Activated naive CD4-positive, alpha-beta T cell treated with anti-CD3 and anti-CD28 coated beads for 36 hours (primary cell): ENCODE measurements at regions of chr19 and their contacts with region 1.

Region 1: GRCh38 chr19:1884719-1885334 is 469 bp downstream of the ABHD17A start:
- DNase-seq: no peak
- H3K4me3 Mint-ChIP-seq: peak overlapping the region; percentile 96
- H3K27ac Mint-ChIP-seq: peak overlapping the region; percentile 95
- H3K4me1 Mint-ChIP-seq: peaks cover 27% of the 10 kb centered on the region
- H3K27me3 Mint-ChIP-seq: no peaks in the 10 kb centered on the region

Region 2: DNA sequence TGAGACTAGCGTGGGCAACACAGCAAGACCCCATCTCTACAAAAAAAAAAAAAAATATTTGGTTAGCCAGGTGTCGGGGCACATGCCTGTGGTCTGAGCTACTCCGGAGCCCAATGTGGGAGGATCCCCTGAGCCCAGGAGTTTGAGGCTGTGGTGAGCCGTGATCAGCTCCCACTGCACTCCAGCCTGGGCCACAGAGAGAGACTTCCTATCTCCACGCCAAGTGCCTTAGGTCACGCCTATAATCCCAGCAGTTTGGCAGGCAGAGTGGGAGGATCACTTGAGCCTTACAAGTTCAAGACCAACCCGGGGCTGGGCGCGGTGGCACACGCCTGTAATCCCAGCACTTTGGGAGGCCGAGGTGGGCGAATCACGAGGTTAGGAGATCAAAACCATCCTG is 11.7 kb after region 1 on chr19:
- CTCF ChIA-PET with region 1: interaction called, 5 read pairs
- intact Hi-C with region 1: loop called (anchors 1 kb)
- DNase-seq: no peak
- H3K4me3 Mint-ChIP-seq: peak overlapping the region; percentile 85
- H3K27ac Mint-ChIP-seq: peak overlapping the region; percentile 95
- H3K4me1 Mint-ChIP-seq: peaks cover 28% of the 10 kb centered on the region
- H3K27me3 Mint-ChIP-seq: no peaks in the 10 kb centered on the region

Region 3: GRCh38 chr19:2221918-2222317 is 337.1 kb after region 1 on chr19:
- CTCF ChIA-PET with region 1: no interaction called
- intact Hi-C with region 1: no loop called
- DNase-seq: no peak
- H3K4me3 Mint-ChIP-seq: no peak overlapping the region
- H3K27ac Mint-ChIP-seq: no peak overlapping the region
- H3K4me1 Mint-ChIP-seq: no peaks in the 10 kb centered on the region
- H3K27me3 Mint-ChIP-seq: no peaks in the 10 kb centered on the region